Activated CD8-positive, alpha-beta T cell treated with anti-CD3 and anti-CD28 coated beads for 36 hours (primary cell): ENCODE measurements at regions of chr3 and their contacts with region 1.

Region 1: GRCh38 chr3:72949016-72949415 is 47.6 kb upstream of the PPP4R2 start:
- DNase-seq: no peak
- ATAC-seq: no peak
- H3K4me3 Mint-ChIP-seq: no peak overlapping the region
- H3K27ac Mint-ChIP-seq: no peak overlapping the region
- H3K4me1 Mint-ChIP-seq: peaks cover 23% of the 10 kb centered on the region
- H3K27me3 Mint-ChIP-seq: no peaks in the 10 kb centered on the region
- CTCF ChIP-seq: no peak

Region 2: DNA sequence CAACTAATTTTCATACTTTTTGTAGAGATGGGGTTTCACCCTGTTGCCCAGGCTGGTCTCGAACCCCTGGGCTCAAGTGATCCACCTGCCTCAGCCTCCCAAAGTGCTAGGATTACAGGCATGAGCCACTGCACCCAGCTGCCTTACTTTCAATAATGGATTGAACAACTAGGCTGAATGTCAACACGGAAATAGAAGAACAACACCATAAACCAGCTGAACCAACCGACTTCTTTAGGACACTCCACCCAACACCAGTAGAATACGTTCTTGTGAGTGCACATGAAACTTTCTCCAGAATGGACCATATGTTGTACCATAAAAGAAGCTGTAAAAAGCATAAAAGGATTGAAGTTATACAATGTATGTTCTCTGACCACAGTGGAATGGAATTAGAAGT is 18.3 kb before region 1 on chr3:
- CTCF ChIA-PET with region 1: no interaction called
- POLR2A ChIA-PET with region 1: no interaction called
- intact Hi-C with region 1: no loop called
- DNase-seq: no peak
- ATAC-seq: no peak
- H3K4me3 Mint-ChIP-seq: no peak overlapping the region
- H3K27ac Mint-ChIP-seq: no peak overlapping the region
- H3K4me1 Mint-ChIP-seq: no peaks in the 10 kb centered on the region
- H3K27me3 Mint-ChIP-seq: no peaks in the 10 kb centered on the region
- CTCF ChIP-seq: no peak

Region 3: GRCh38 chr3:73086071-73086494 is 137.1 kb after region 1 on chr3:
- CTCF ChIA-PET with region 1: interaction called, 14 read pairs
- POLR2A ChIA-PET with region 1: no interaction called
- intact Hi-C with region 1: no loop called
- DNase-seq: peak; percentile 64
- ATAC-seq: peak; percentile 67
- H3K4me3 Mint-ChIP-seq: no peak overlapping the region
- H3K27ac Mint-ChIP-seq: no peak overlapping the region
- H3K4me1 Mint-ChIP-seq: peaks cover 8% of the 10 kb centered on the region
- H3K27me3 Mint-ChIP-seq: no peaks in the 10 kb centered on the region
- CTCF ChIP-seq: peak; percentile 94